Activated T-helper 2 cell treated with anti-CD3 and anti-CD28 coated beads, Interferon-gamma antibody, Interleukin-2, Interleukin-4, amounts not matched to agents 10 μg/mL and 5 μg/mL and 100 μg/mL, durations not matched to agents 14 hours and 24 hours and 36 hours (primary cell): ENCODE measurements at regions of chr3 and their contacts with region 1.

Region 1: GRCh38 chr3:59935025-59935424 is 885.2 kb upstream of the CFAP20DC start:
- DNase-seq: no peak
- H3K4me3 Mint-ChIP-seq: no peak overlapping the region
- H3K27ac Mint-ChIP-seq: peak overlapping the region; percentile 69
- H3K4me1 Mint-ChIP-seq: peaks cover 38% of the 10 kb centered on the region
- H3K27me3 Mint-ChIP-seq: no peaks in the 10 kb centered on the region

Region 2: DNA sequence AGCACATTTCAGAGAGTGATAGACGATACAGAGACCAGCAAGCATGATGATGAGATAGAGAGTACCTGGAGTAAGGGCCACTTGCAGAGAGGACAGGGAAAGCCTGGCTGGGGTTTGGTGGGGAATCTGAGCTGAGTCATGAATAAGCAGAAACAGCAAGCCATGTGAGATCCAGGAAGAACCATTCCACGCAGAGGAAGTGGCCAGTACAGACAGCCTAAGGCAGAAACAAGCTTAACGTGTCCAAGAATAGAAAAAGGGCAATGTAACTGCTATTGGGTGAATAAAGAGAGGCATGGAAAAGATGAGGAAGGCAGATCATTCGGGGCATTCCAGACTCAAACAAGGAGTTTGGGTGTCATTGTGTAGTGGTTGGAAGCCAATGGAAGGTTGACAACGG is 68.9 kb before region 1 on chr3:
- intact Hi-C with region 1: loop called (anchors 1 kb)
- DNase-seq: no peak
- H3K4me3 Mint-ChIP-seq: no peak overlapping the region
- H3K27ac Mint-ChIP-seq: peak overlapping the region; percentile 2
- H3K4me1 Mint-ChIP-seq: peaks cover 31% of the 10 kb centered on the region
- H3K27me3 Mint-ChIP-seq: no peaks in the 10 kb centered on the region

Region 3: DNA sequence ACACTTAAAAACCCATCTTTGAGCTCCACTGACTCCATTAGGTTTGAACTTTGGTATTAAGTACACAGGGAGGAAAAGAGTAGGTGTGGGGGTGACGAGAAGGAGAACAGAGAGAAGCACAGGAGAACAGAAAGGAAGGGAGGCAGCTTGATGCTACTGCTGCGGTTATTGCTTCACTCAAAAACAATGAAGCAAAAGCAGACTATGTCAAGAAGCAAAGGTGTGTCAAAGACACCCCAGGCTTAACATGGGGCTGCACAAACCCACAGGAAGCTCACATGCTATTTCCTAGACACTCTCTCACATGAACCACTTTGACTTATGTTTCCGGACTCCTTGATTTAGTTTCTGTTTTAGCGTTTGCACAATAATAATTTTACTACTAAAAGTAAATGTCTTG is 75.8 kb after region 1 on chr3:
- intact Hi-C with region 1: loop called (anchors 10 kb)
- DNase-seq: peak; percentile 72
- H3K4me3 Mint-ChIP-seq: peak overlapping the region; percentile 49
- H3K27ac Mint-ChIP-seq: peak overlapping the region; percentile 85
- H3K4me1 Mint-ChIP-seq: peaks cover 67% of the 10 kb centered on the region
- H3K27me3 Mint-ChIP-seq: no peaks in the 10 kb centered on the region

Region 4: GRCh38 chr3:60053526-60054265 is 118.7 kb after region 1 on chr3:
- intact Hi-C with region 1: loop called (anchors 10 kb)
- DNase-seq: no peak
- H3K4me3 Mint-ChIP-seq: peak overlapping the region; percentile 35
- H3K27ac Mint-ChIP-seq: peak overlapping the region; percentile 89
- H3K4me1 Mint-ChIP-seq: peaks cover 79% of the 10 kb centered on the region
- H3K27me3 Mint-ChIP-seq: no peaks in the 10 kb centered on the region

Region 5: DNA sequence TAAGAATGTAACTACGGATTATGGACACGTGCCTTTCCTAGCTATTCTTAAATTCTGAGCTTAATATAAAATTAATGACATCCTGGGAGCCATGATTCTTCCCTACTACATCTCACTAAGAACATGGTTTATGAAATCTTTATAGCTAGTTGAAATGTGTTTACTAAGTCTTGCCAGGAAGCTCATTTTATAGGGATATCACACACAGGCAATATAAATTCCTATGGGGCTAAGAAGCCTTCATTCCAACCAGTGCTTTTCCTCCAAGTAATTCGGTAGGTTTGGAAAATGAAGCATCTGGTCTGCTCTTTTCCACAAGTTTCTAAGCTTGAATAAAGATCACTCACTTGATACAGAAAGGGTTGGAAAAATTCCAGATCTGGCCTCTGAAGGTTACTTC is 513.7 kb after region 1 on chr3:
- intact Hi-C with region 1: no loop called
- DNase-seq: no peak
- H3K4me3 Mint-ChIP-seq: no peak overlapping the region
- H3K27ac Mint-ChIP-seq: no peak overlapping the region
- H3K4me1 Mint-ChIP-seq: peaks cover 6% of the 10 kb centered on the region
- H3K27me3 Mint-ChIP-seq: no peaks in the 10 kb centered on the region